Activated CD4-positive, alpha-beta memory T cell treated with anti-CD3 and anti-CD28 coated beads, Interleukin-2, amount 10 ng/mL, durations not matched to agents 7 days and 5 days (primary cell): ENCODE measurements at regions of chr4 and their contacts with region 1.

Region 1: DNA sequence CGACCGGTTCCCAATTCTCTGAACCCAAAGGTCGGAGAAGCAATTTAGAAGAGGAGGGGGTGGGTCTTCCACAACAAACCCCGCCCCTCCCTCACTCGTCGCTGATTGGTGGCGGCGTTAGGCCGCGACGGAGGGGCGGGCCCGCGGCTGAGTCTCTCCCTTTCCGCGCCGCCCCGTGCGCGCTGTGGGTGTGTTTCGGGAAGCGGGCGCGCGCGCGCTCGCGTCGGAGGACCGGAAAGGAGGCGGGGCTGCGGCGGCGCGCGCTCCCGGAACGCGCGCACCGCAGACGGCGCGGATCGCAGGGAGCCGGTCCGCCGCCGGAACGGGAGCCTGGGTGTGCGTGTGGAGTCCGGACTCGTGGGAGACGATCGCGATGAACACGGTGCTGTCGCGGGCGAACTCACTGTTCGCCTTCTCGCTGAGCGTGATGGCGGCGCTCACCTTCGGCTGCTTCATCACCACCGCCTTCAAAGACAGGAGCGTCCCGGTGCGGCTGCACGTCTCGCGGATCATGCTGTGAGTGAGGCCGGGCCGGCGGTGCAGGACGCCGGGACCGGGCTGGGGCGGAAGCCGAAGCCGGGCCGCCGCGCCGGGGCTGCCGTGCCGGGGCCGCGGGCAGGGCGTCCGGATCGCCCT is at the start of gene SPCS3:
- DNase-seq: peak; percentile 95
- H3K4me3 Mint-ChIP-seq: peak within 1 kb of the TSS; percentile 88
- H3K27ac Mint-ChIP-seq: peak within 1 kb of the TSS; percentile 88
- H3K4me1 Mint-ChIP-seq: peaks cover 42% of the 10 kb centered on the region
- H3K27me3 Mint-ChIP-seq: no peaks in the 10 kb centered on the region
- total RNA-seq, gene SPCS3: 215 to 233 TPM

Region 2: GRCh38 chr4:176309046-176309445 is 10.8 kb before region 1 on chr4:
- CTCF ChIA-PET with region 1: no interaction called
- POLR2A ChIA-PET with region 1: no interaction called
- DNase-seq: no peak
- H3K4me3 Mint-ChIP-seq: no peak overlapping the region
- H3K27ac Mint-ChIP-seq: no peak overlapping the region
- H3K4me1 Mint-ChIP-seq: no peaks in the 10 kb centered on the region
- H3K27me3 Mint-ChIP-seq: peaks cover 18% of the 10 kb centered on the region

Region 3: GRCh38 chr4:176340871-176341685 is 21.3 kb after region 1 on chr4:
- CTCF ChIA-PET with region 1: interaction called, 11 read pairs
- POLR2A ChIA-PET with region 1: no interaction called
- DNase-seq: no peak
- H3K4me3 Mint-ChIP-seq: no peak overlapping the region
- H3K27ac Mint-ChIP-seq: no peak overlapping the region
- H3K4me1 Mint-ChIP-seq: no peaks in the 10 kb centered on the region
- H3K27me3 Mint-ChIP-seq: no peaks in the 10 kb centered on the region

Region 4: DNA sequence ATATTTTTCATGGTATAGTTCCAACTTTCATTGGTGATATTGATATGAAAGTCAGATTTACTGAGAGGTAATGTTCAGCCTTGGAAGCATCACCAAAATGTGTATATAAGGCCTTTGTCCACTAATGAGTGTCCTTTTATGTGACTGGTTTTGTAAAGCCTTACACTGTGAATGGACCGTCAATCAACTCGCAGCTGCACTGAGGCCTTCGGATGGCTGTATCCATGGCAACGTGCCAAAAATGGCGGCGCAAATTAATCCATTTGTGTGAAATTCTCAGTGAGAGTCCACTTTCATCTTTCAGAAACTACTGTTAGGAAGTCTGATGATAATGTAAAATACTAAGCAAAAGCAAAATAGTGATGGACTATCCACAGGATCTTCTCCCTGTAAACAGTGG is 131.6 kb after region 1 on chr4:
- CTCF ChIA-PET with region 1: no interaction called
- POLR2A ChIA-PET with region 1: no interaction called
- DNase-seq: no peak
- H3K4me3 Mint-ChIP-seq: no peak overlapping the region
- H3K27ac Mint-ChIP-seq: no peak overlapping the region
- H3K4me1 Mint-ChIP-seq: no peaks in the 10 kb centered on the region
- H3K27me3 Mint-ChIP-seq: no peaks in the 10 kb centered on the region